ENCODE measurements at regions of chr14 and their contacts with region 1.

Region 1: GRCh38 chr14:103391048-103391447 is 5.8 kb downstream of the MARK3 start:
- DNase-seq: peak; percentile 81
- H3K4me3 Mint-ChIP-seq: no peak overlapping the region
- H3K27ac Mint-ChIP-seq: no peak overlapping the region
- H3K4me1 Mint-ChIP-seq: peaks cover 42% of the 10 kb centered on the region
- H3K27me3 Mint-ChIP-seq: no peaks in the 10 kb centered on the region

Region 2: GRCh38 chr14:103361868-103362267 is 29.2 kb before region 1 on chr14:
- intact Hi-C with region 1: no loop called
- DNase-seq: no peak
- H3K4me3 Mint-ChIP-seq: no peak overlapping the region
- H3K27ac Mint-ChIP-seq: no peak overlapping the region
- H3K4me1 Mint-ChIP-seq: peaks cover 2% of the 10 kb centered on the region
- H3K27me3 Mint-ChIP-seq: peaks cover 1% of the 10 kb centered on the region

Region 3: DNA sequence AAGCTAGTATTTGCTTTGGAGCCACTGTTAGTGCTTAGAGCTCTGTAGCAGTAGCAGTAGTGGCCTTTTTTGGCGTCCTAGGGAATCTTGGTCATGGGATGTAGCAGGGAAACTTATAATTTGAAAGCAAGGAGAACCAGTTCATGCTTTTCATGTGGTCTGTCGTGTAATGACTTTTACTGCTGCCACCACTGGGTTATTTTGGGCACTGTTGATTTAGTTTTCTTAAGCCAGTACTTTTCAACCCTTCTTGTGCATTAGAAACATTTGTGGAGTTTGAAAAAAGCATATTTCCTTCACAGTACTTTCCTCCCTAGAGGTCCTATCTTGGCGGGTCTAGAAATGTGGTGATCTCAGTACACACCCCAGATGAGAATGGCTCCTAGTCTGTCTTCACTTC is 43.9 kb after region 1 on chr14:
- intact Hi-C with region 1: loop called (anchors 5 kb)
- DNase-seq: no peak
- H3K4me3 Mint-ChIP-seq: no peak overlapping the region
- H3K27ac Mint-ChIP-seq: no peak overlapping the region
- H3K4me1 Mint-ChIP-seq: no peaks in the 10 kb centered on the region
- H3K27me3 Mint-ChIP-seq: no peaks in the 10 kb centered on the region

Region 4: DNA sequence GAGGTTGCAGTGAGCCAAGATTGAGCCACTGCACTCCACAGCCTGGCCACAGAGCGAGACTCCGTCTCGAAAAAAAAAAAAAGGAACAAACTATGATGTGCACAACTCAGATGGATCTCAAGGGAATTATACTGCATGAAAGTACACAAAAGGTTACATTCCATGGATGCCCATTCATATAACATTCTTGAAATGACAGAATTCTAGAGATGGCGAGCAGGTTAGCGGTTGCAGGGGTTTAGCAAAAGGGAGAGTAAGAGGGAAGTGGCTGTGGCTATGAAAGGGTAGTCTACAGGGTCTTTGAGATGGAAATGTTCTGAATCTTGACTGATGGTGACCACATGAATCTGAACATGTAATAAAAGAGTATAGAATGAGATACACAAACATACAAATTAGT is 81.9 kb after region 1 on chr14:
- intact Hi-C with region 1: loop called (anchors 10 kb)
- DNase-seq: no peak
- H3K4me3 Mint-ChIP-seq: no peak overlapping the region
- H3K27ac Mint-ChIP-seq: no peak overlapping the region
- H3K4me1 Mint-ChIP-seq: no peaks in the 10 kb centered on the region
- H3K27me3 Mint-ChIP-seq: no peaks in the 10 kb centered on the region